Dendritic cell treated with granulocyte-macrophage colony-stimulating factor and Interleukin-4, amounts not matched to agents 40 ng/mL and 50 ng/mL, for 4 days (primary cell): ENCODE measurements at regions of chr16 and their contacts with region 1.

Region 1: DNA sequence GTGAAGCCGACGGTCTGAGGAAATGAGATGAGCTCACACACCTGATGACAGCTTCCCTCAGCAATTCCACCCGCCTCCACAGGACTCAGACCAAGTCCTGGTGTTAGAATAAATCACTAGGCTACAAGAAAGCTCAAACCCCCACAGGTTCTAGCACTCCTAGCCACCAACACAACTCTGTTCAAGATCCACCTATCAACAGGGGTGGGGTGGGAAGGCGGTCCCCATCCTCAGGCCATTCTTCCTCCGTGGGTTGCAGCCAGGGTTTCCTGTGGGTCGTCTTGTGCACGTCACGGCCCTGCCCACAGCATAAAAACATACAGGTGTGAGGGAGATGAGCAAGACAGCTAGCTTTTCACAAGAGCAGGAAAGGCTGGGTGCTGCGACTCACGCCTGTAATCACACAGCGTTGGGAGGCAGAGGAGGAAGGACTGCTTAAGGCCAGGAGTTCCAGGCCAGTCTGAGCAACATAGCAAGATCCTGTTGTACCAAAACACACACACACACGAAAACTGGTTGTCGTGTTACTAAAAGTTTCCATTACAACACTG is 81.1 kb downstream of the ANKRD11 start:
- H3K4me3 Mint-ChIP-seq: no peak overlapping the region
- H3K27ac Mint-ChIP-seq: no peak overlapping the region
- H3K4me1 Mint-ChIP-seq: peaks cover 85% of the 10 kb centered on the region
- H3K27me3 Mint-ChIP-seq: no peaks in the 10 kb centered on the region

Region 2: GRCh38 chr16:89343501-89344457 is 65.5 kb before region 1 on chr16:
- intact Hi-C with region 1: loop called (anchors 10 kb)
- H3K4me3 Mint-ChIP-seq: no peak overlapping the region
- H3K27ac Mint-ChIP-seq: no peak overlapping the region
- H3K4me1 Mint-ChIP-seq: peaks cover 54% of the 10 kb centered on the region
- H3K27me3 Mint-ChIP-seq: no peaks in the 10 kb centered on the region

Region 3: DNA sequence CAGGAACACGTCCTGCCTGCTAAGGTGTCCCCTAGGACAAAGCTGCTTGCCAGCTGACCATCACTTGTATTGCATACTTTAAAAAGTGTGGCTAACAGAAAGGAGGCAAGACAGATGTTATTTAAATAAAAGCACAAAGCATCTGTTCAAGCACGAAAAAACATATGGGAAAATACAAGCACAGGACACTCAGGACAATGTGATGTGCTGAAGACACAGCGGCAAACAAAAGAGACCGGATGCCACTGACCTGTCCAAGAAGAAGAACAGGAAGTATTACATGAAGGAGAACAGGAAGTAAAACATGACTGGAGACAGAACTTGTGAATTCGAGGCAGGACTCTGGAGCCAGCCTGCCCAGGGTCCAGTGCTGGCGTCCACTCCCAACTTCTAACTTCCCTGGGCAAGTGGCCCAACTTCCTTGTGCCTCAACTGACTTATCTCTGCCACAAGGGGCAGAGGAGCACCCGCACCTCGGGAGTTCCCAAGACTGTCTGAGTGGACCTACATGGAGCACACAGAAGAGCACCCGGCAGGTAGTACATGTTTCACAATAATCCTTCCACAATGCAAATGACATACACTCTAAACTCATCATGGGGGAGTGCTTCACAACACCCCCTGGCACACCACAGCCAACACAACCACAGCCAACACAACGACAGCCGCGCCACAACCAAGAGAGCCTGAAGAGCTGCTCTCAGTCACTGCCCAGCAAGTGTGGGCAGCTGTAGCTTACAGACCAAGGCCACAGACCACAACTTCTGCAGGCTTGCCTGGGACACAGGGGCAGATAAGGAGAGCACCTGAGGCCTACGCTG is 44.5 kb after region 1 on chr16:
- intact Hi-C with region 1: loop called (anchors 10 kb)
- H3K4me3 Mint-ChIP-seq: peak overlapping the region; percentile 45
- H3K27ac Mint-ChIP-seq: peak overlapping the region; percentile 79
- H3K4me1 Mint-ChIP-seq: peaks cover 54% of the 10 kb centered on the region
- H3K27me3 Mint-ChIP-seq: no peaks in the 10 kb centered on the region